ENCODE measurements at regions of chr7 and their contacts with region 1.

Region 1: GRCh38 chr7:28371846-28372245 is 40.5 kb upstream of the CREB5 start:
- DNase-seq: no peak
- H3K4me3 ChIP-seq: no peak overlapping the region
- H3K27ac ChIP-seq: no peak overlapping the region
- H3K4me1 ChIP-seq: no peaks in the 10 kb centered on the region
- H3K27me3 ChIP-seq: no peaks in the 10 kb centered on the region
- CTCF ChIP-seq: no peak

Region 2: DNA sequence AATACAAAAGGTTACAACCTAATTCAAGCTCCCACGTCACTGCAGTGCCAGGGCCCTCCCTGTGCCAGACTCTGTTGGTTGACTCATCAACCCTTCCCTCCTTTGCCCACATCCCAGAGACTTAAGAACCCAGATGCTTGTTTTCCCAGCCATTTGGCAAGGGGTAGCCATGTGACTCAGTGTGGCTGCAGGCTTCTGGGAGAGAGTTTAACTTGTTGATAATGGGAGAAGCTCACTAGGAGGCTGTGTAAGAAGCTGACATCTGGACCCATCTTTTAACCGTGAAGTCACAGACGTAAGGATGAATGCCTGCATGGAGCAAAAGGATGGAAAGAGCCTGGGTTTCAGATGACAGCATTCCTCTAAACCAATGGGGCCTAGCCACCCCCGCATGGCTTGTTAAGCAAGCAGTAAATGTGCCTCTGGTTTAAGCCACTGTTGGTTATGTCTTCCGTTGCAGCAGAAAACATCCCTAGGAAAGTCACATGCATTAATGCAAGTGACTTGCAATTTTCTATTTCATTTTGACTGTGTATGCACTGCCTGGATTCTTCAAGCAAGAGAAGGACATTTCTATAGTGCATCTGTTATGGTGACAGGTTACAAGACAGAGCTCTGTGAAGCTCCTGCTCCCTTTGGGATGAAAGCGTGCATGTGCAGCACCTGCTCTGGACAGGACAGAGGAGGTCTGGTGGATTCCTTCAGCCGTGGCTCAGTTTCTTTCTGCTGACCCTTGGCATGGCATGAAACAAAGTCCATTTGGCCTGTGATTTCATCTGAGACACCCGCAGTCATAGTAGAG is 17.0 kb before region 1 on chr7:
- intact Hi-C with region 1: loop called (anchors 2 kb)
- DNase-seq: no peak
- H3K4me3 ChIP-seq: no peak overlapping the region
- H3K27ac ChIP-seq: no peak overlapping the region
- H3K4me1 ChIP-seq: no peaks in the 10 kb centered on the region
- H3K27me3 ChIP-seq: no peaks in the 10 kb centered on the region
- CTCF ChIP-seq: no peak

Measured in tibial artery (tissue), 4 donors.